HCT116 (cell line): ENCODE measurements at regions of chr5 and their contacts with region 1.

Region 1: GRCh38 chr5:150960791-150961396 is 56.1 kb upstream of the ZNF300 start:
- DNase-seq: peak; percentile 19
- ATAC-seq: no peak
- H3K4me3 ChIP-seq: no peak overlapping the region
- H3K27ac ChIP-seq: no peak overlapping the region
- H3K4me1 ChIP-seq: no peaks in the 10 kb centered on the region
- H3K27me3 ChIP-seq: no peaks in the 10 kb centered on the region
- CTCF ChIP-seq: no peak
- POLR2A ChIP-seq: no peak
- RAD21 ChIP-seq: no peak

Region 2: DNA sequence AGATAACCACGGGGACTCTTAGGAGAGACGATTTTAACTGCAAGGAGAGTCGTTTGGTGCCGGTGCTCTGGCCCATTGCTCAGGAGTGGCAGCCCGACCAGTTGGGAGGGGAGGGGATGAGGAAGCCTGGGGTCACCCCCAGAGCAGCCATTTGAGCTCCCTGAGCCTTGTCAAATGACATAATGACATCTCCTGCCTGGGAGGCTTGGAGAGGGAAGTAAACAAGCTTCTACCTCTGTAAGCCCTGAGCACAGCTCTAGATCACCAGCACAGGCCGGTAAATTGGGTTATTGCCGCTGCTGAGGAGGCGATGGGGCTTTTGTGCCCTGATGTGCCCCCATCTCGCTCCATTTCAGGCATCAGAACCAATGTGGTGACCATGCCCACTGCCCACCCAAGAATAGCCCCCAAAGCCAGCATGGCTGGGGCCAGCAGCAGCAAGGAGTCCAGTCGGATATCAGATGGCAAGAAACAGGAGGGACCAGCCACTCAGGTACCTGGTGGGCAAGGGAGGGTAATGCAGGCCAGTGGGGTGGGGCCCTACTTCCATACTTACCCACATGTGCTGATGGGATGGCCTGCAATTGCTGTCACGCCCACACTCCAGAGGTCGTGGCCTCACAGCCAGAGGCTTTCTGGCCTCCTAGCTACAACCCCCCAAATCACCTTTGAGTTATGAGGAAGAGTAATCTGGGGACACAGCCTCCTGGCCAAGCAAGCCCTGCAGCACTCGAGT is 571.2 kb before region 1 on chr5:
- CTCF ChIA-PET with region 1: no interaction called
- POLR2A ChIA-PET with region 1: no interaction called
- RAD21 ChIA-PET with region 1: no interaction called
- intact Hi-C with region 1: no loop called
- DNase-seq: no peak
- ATAC-seq: peak; percentile 57
- H3K4me3 ChIP-seq: no peak overlapping the region
- H3K27ac ChIP-seq: no peak overlapping the region
- H3K4me1 ChIP-seq: no peaks in the 10 kb centered on the region
- H3K27me3 ChIP-seq: no peaks in the 10 kb centered on the region
- CTCF ChIP-seq: no peak
- POLR2A ChIP-seq: no peak
- RAD21 ChIP-seq: no peak

Region 3: GRCh38 chr5:150710165-150710564 is 250.7 kb before region 1 on chr5:
- CTCF ChIA-PET with region 1: no interaction called
- POLR2A ChIA-PET with region 1: no interaction called
- RAD21 ChIA-PET with region 1: no interaction called
- intact Hi-C with region 1: no loop called
- DNase-seq: no peak
- ATAC-seq: no peak
- H3K4me3 ChIP-seq: no peak overlapping the region
- H3K27ac ChIP-seq: no peak overlapping the region
- H3K4me1 ChIP-seq: no peaks in the 10 kb centered on the region
- H3K27me3 ChIP-seq: no peaks in the 10 kb centered on the region
- CTCF ChIP-seq: peak; percentile 27 to 52 (median 30); a peak in 3 of 6 replicates
- POLR2A ChIP-seq: no peak
- RAD21 ChIP-seq: peak; percentile 43

Region 4: DNA sequence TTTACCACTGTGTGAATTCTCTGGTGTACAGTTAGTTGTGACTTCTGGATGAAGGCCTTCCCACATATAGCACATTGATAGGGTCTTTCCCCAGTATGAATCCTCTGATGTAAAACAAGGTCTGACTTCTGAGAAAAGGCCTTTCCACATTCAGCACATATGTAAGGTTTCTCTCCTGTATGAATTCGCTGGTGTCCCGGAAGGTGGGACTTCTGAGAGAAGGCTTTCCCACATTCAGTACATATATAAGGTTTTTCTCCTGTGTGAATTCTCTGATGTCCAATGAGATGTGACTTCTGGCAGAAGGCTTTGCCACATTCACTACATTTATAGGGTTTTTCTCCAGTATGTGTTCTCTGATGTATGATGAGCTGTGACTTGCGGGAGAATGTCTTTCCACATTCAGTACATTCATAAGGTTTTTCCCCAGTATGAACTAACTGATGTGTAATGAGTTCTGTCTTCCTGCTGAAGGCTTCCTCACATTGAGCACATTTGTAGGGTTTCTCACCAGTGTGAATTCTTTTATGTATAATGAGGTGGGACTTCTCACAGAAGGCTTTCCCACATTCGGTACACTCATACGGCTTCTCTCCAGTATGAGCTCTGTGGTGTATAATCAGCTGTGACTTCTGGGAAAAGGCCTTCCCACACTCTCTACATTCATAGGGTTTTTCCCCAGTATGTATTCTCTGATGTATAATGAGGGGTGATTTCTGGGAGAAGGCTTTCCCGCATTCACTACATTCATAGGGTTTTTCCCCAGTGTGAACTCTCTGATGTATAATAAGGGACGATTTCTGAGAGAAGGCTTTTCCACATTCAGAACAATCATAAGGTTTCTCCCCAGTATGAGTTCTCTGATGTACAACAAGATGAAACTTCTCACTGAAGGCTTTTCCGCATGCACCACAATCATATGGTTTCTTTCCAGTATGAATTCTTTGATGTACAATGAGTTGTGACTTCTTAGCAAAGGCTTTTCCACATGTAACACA is 65.2 kb before region 1 on chr5:
- CTCF ChIA-PET with region 1: no interaction called
- POLR2A ChIA-PET with region 1: no interaction called
- RAD21 ChIA-PET with region 1: no interaction called
- intact Hi-C with region 1: loop called (anchors 5 kb)
- DNase-seq: no peak
- ATAC-seq: no peak
- H3K4me3 ChIP-seq: no peak overlapping the region
- H3K27ac ChIP-seq: no peak overlapping the region
- H3K4me1 ChIP-seq: no peaks in the 10 kb centered on the region
- H3K27me3 ChIP-seq: no peaks in the 10 kb centered on the region
- CTCF ChIP-seq: no peak
- POLR2A ChIP-seq: no peak
- RAD21 ChIP-seq: no peak

Region 5: GRCh38 chr5:150978590-150978989 is 17.7 kb after region 1 on chr5:
- CTCF ChIA-PET with region 1: no interaction called
- POLR2A ChIA-PET with region 1: no interaction called
- RAD21 ChIA-PET with region 1: no interaction called
- intact Hi-C with region 1: no loop called
- DNase-seq: no peak
- ATAC-seq: no peak
- H3K4me3 ChIP-seq: no peak overlapping the region
- H3K27ac ChIP-seq: no peak overlapping the region
- H3K4me1 ChIP-seq: peaks cover 0 to 8% of the 10 kb centered on the region in 2 experiments; a peak in 1 of 4 replicates
- H3K27me3 ChIP-seq: no peaks in the 10 kb centered on the region
- CTCF ChIP-seq: no peak
- POLR2A ChIP-seq: no peak
- RAD21 ChIP-seq: no peak

Region 6: GRCh38 chr5:151288180-151288579 is 327.3 kb after region 1 on chr5:
- CTCF ChIA-PET with region 1: no interaction called
- POLR2A ChIA-PET with region 1: no interaction called
- RAD21 ChIA-PET with region 1: no interaction called
- intact Hi-C with region 1: no loop called
- DNase-seq: peak; percentile 41
- ATAC-seq: peak; percentile 85
- H3K4me3 ChIP-seq: no peak overlapping the region
- H3K27ac ChIP-seq: no peak overlapping the region
- H3K4me1 ChIP-seq: peaks cover 4 to 5% of the 10 kb centered on the region in 2 experiments; a peak in 3 of 4 replicates
- H3K27me3 ChIP-seq: no peaks in the 10 kb centered on the region
- CTCF ChIP-seq: peak; percentile 43 to 65 (median 44)
- POLR2A ChIP-seq: no peak
- RAD21 ChIP-seq: peak; percentile 64